ENCODE measurements at regions of chr4 and their contacts with region 1.

Region 1: DNA sequence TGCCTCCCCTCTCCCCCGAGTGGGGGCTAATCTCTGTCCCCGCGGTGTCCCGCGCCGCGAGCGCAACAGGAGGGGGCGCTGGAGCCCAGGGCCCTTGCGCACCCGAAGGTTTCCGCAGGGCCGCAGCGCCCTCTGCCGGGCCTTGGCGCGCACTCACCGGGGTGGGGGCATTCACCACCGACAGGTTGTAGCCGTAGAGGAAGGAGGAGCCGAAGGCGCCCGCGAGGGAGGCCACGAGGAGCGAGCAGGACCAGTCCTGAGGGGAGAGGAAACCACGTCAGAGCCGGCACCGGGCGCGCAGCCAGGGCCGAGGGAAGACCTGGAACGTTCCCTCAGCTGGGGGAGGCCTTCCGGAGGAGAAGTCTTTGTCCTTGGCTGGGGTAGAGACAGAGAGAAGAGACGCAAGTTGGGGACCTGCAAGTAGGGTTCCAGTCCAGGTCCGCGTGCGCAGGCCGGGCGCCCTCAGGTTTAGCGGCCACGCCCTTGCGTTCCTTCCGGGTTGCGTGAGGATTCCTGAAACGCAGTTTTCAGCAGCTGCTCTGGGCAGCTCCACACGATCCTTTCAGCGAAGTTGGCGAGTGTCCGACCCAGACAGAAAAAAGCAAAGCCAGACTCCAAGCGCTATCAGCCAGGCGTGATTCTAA is 2.4 kb downstream of the SLC2A9 start:
- H3K4me3 Mint-ChIP-seq: peak overlapping the region; percentile 81
- H3K27ac Mint-ChIP-seq: peak overlapping the region; percentile 96
- H3K4me1 Mint-ChIP-seq: peaks cover 77% of the 10 kb centered on the region
- H3K27me3 Mint-ChIP-seq: no peaks in the 10 kb centered on the region

Region 2: DNA sequence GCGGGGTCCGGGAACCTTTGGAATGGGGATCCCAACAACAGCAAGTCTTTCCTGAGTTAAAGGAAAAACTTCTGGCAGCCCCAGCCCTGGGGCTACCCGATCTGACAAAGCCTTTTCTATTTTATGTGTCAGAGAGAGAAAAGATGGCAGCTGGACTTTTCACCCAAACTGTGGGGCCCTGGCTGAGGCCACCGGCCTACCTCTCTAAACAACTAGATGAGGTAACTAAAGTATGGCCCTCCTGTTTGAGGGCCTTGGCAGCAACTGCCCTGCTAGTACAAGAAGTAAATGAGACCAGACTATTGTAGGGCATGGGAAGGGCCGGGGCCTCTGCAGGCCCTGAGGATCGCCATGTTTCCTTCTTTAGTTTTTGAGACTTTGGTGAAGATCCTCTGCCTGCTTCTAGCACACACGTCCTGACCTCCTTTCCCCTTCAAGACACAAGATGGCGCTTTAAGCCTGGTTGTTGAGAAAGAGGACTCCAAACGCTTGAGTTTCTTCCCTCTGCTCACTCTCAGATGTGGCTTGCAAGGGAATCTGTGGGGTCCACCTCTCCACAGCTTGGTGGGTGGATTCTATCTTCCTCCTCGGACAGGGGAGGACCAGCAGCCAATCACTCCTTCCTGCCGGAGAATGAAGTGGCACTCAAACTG is 256.0 kb before region 1 on chr4:
- intact Hi-C with region 1: loop called (anchors 1 kb)
- H3K4me3 Mint-ChIP-seq: no peak overlapping the region
- H3K27ac Mint-ChIP-seq: no peak overlapping the region
- H3K4me1 Mint-ChIP-seq: peaks cover 5% of the 10 kb centered on the region
- H3K27me3 Mint-ChIP-seq: peaks cover 24% of the 10 kb centered on the region

Region 3: GRCh38 chr4:9924750-9925149 is 94.2 kb before region 1 on chr4:
- intact Hi-C with region 1: loop called (anchors 10 kb)
- H3K4me3 Mint-ChIP-seq: no peak overlapping the region
- H3K27ac Mint-ChIP-seq: peak overlapping the region; percentile 3
- H3K4me1 Mint-ChIP-seq: peaks cover 45% of the 10 kb centered on the region
- H3K27me3 Mint-ChIP-seq: no peaks in the 10 kb centered on the region

Region 4: DNA sequence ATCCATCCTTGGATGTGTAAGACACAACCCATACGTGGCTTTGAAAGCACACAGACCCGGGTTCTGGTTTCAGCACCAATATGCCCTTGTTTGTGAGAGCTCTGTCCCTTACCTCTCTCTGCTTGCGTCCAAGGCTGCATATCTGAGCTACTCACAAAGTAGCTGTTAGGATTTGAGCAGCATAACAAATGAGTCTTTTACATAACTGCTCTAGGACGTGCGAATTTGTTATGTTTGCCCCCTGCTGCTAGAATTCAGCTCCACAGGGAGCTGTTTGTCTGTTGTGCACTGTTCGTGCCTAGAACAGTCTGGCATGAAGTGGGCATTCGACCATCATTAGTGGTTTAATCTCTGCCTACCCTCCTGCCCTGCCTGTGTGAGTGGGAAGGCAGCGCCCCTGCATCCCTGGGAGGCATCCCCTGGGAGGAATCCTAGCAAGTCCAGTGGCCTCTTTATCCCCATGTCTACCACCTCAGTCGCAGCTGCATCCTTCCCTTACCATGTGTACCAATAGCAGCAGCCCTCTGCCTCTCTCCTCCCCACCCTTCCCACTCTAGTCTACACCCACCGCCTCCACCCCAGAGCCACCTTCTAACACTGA is 39.7 kb before region 1 on chr4:
- intact Hi-C with region 1: no loop called
- H3K4me3 Mint-ChIP-seq: no peak overlapping the region
- H3K27ac Mint-ChIP-seq: no peak overlapping the region
- H3K4me1 Mint-ChIP-seq: no peaks in the 10 kb centered on the region
- H3K27me3 Mint-ChIP-seq: no peaks in the 10 kb centered on the region

Region 5: GRCh38 chr4:10063544-10064300 is 44.8 kb after region 1 on chr4:
- intact Hi-C with region 1: loop called (anchors 1 kb)
- H3K4me3 Mint-ChIP-seq: no peak overlapping the region
- H3K27ac Mint-ChIP-seq: peak overlapping the region; percentile 78
- H3K4me1 Mint-ChIP-seq: peaks cover 28% of the 10 kb centered on the region
- H3K27me3 Mint-ChIP-seq: no peaks in the 10 kb centered on the region

Measured in dendritic cell treated with granulocyte-macrophage colony-stimulating factor and Interleukin-4, amounts not matched to agents 40 ng/mL and 50 ng/mL, for 4 days (primary cell).